Colonic mucosa (tissue), 4 donors: ENCODE measurements at regions of chr3 and their contacts with region 1.

Region 1: DNA sequence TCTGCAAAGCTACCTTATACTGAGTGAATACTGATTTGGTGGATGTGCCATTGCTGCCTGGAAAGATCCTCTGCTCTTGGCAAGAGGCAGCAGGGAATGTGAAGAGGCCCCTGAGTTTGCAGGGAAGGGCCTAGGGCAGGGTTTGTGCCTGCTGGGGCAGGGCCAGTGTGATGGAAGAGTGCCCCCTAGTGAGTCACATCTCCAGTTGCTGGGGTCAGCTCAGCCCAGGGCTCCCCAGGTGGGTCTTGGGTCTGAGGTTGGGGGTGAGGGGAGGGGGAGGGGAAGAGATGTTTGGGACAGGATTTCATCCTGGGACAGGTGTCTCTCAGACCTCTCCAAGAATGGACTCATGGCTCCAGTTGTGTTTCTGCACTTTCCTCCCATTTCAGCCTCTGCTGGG is 4.1 kb upstream of the AMOTL2 start:
- DNase-seq: peak; percentile 71
- H3K4me3 ChIP-seq: no peak overlapping the region
- H3K27ac ChIP-seq: no peak overlapping the region
- H3K4me1 ChIP-seq: peaks cover 14% of the 10 kb centered on the region
- H3K27me3 ChIP-seq: no peaks in the 10 kb centered on the region
- CTCF ChIP-seq: peak; percentile 55

Region 2: DNA sequence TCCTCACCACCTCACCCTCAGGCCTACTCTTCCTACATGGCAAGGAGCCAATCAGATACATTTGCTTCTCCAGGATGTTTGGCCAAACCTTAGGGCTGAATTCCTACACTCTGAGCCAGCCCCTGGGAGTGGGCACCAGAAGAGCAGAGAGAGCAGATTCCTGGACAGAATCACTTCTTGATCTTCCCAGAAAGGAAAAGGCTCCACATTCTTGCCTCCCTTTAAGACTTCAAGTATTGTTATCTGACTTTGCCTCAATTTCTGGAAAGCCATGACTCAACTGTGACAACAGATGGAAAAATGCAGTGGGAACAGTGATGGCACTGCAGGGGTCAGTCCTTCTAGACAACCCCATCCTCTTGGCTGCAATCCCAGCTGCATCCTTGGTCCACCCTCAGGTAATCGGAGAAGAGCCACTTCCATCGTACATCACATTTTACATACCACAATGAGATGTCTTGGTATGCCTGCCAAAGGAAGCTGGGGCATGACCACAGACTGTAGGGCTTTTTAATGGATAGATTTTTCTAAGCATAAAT is 369.7 kb before region 1 on chr3:
- intact Hi-C with region 1: no loop called
- DNase-seq: no peak
- H3K4me3 ChIP-seq: no peak overlapping the region
- H3K27ac ChIP-seq: no peak overlapping the region
- H3K4me1 ChIP-seq: no peaks in the 10 kb centered on the region
- H3K27me3 ChIP-seq: no peaks in the 10 kb centered on the region
- CTCF ChIP-seq: no peak

Region 3: DNA sequence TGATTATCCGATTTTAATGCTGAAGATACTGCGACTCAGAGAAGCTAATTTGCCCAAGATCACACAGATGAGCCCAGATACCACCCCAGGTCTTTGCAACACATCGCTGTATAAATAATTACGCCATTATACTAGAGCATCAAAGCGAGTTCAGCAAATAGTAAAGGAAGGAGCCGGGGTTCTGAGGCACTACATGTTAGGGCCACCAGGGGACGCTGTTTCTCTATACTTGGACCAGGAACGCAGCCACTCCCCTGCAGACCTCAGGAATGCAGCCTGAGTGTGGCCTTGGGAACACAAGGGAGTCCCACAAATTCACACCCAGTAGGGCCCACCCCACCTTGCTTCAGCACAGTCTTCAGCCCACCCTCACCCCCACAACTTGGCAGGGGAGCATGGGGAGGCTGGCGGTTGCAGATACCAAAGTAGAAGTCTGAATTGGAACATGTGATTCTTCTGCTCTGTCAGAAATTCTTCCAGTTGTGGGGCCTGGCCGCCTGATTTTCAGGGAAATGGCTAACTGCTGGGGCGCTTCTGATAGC is 70.0 kb before region 1 on chr3:
- intact Hi-C with region 1: loop called (anchors 2 kb)
- DNase-seq: peak; percentile 89
- H3K4me3 ChIP-seq: no peak overlapping the region
- H3K27ac ChIP-seq: peak overlapping the region; percentile 29
- H3K4me1 ChIP-seq: peaks cover 7% of the 10 kb centered on the region
- H3K27me3 ChIP-seq: no peaks in the 10 kb centered on the region
- CTCF ChIP-seq: peak; percentile 98

Region 4: DNA sequence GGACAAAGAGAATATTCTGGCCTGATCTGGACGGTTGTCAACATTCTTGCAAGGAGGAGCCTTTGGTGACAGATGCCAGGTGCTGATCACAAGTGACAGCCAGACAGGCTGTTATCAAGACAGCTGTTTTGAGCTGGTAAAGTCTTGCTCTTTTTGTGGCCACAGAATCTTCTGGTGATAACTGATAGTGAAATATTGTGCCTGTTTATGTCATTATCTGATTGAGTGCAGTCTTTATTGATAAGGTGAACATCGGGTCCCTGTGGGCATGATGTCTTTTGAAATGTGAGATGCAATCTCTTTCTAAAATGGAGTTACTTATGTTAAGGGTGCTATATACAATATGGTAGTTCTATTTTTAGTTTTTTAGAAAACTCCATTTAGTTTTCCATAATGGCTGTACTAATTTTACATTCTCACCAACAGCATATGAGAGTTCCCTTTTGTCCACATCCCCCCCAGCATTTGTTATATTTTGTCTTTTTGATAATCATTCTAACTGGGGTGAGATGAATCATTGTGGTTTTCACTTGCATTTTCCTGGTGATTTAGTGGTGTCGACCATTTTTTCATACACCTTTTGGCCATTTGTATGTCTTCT is 118.2 kb after region 1 on chr3:
- intact Hi-C with region 1: no loop called
- DNase-seq: no peak
- H3K4me3 ChIP-seq: no peak overlapping the region
- H3K27ac ChIP-seq: no peak overlapping the region
- H3K4me1 ChIP-seq: no peaks in the 10 kb centered on the region
- H3K27me3 ChIP-seq: no peaks in the 10 kb centered on the region
- CTCF ChIP-seq: no peak